AG04450 (cell line): ENCODE measurements at regions of chr21 and their contacts with region 1.

Region 1: GRCh38 chr21:27425574-27425973 is 458.7 kb upstream of the ADAMTS5 start:
- DNase-seq: peak; percentile 8
- H3K4me3 ChIP-seq: no peak overlapping the region
- H3K27ac ChIP-seq: no peak overlapping the region
- H3K27me3 ChIP-seq: no peaks in the 10 kb centered on the region
- CTCF ChIP-seq: no peak

Region 2: DNA sequence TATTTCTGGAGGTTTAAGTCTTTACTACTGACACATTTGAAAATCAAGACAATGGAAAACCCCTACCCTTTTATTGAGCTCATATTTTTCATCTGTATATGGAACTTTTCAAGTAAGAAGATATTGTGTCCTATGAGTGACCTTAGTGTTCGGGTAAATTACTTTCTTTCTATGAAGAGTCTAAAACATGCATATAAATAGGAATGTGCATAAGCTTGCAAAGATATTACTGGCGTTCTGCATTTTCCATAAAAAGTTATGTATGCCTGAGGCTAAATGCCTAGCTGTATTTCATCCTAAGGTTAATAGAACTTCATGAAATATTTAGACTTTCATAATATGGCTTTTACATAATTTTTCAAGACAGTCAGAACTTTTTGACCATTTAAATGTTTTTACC is 37.2 kb after region 1 on chr21:
- CTCF ChIA-PET with region 1: interaction called, 12 read pairs
- POLR2A ChIA-PET with region 1: no interaction called
- DNase-seq: no peak
- H3K4me3 ChIP-seq: no peak overlapping the region
- H3K27ac ChIP-seq: no peak overlapping the region
- H3K27me3 ChIP-seq: no peaks in the 10 kb centered on the region
- CTCF ChIP-seq: no peak